Kidney (tissue), 22 donors: ENCODE measurements at regions of chr20 and their contacts with region 1.

Region 1: DNA sequence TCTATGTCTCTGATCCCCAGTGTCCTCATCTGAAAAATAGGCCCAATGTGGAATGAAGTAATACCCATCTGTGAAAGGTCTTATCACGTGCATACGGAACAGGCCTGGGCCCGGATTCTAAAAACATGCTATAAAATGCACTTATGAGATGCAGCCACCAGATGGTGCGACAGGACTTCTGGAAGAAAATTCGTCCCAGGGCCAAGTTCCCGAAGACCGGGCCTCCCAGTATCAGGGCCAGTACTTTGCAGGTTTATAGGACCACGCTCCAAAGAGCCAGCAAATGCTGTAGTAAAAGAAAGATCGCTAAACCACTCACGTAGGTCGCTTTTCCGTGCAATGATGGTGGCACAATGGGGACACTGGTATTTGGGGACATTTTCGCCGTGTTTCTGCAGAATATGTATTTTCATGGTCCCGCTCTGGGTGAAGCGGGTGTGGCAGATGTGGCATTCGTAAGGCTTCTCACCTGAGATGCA is 10.6 kb downstream of the CTCFL start:
- DNase-seq: peak in 4 of 5 donors; percentile 71 to 86 (median 74)
- H3K4me3 ChIP-seq: no peak overlapping the region
- H3K27ac ChIP-seq: no peak overlapping the region
- H3K4me1 ChIP-seq: peaks cover 0 to 3% (median 0%) of the 10 kb centered on the region in 3 donors
- H3K27me3 ChIP-seq: no peaks in the 10 kb centered on the region
- CTCF ChIP-seq: peak; percentile 89

Region 2: GRCh38 chr20:57596998-57597939 is 83.0 kb after region 1 on chr20:
- intact Hi-C with region 1: loop called (anchors 2 kb)
- DNase-seq: peak; percentile 52 to 89 (median 81)
- H3K4me3 ChIP-seq: no peak overlapping the region
- H3K27ac ChIP-seq: no peak overlapping the region
- H3K4me1 ChIP-seq: peaks cover 0 to 13% (median under 1%) of the 10 kb centered on the region in 3 donors
- H3K27me3 ChIP-seq: no peaks in the 10 kb centered on the region
- CTCF ChIP-seq: peak; percentile 98

Region 3: DNA sequence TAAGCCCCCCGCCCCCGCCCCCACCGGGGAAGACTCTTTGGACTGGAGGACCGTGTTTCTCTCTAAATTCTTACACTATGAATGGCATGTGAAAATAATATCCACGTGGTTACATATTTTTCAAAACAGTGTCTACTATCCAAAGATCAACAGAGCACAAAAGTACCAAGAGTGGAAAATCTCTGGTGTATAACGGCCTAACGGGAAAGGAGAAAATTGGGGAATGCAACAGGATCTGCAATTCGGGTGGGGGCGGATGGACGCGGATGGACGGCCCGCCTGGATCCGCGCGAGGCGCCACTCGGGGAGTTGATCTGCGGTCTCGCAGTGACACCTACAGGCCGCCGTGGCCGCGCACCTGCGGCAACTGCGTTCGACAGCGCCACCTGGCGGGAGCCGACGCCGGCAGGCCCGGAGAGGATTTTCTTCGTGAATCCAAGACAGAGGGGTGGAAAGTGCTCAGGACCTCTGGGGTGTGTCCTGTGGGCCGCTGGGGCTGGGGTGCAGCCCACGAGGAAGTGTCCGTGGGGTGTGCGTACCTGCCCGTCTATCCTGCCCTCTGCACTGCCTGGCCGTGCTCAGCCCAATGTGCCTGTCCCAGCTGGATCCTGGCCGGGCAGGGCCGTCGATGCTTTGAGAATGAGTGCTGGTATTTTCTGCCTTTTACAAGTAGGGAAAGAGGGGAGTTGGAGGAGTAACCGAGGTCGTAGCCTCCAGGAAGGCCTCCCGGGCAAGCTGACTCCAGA is 695.5 kb after region 1 on chr20:
- intact Hi-C with region 1: loop called (anchors 10 kb)
- DNase-seq: peak; percentile 80 to 93 (median 85)
- H3K4me3 ChIP-seq: no peak overlapping the region
- H3K27ac ChIP-seq: no peak overlapping the region
- H3K4me1 ChIP-seq: no peaks in the 10 kb centered on the region
- H3K27me3 ChIP-seq: no peaks in the 10 kb centered on the region
- CTCF ChIP-seq: peak; percentile 100